Aorta (tissue), 5 donors: ENCODE measurements at regions of chr9 and their contacts with region 1.

Region 1: DNA sequence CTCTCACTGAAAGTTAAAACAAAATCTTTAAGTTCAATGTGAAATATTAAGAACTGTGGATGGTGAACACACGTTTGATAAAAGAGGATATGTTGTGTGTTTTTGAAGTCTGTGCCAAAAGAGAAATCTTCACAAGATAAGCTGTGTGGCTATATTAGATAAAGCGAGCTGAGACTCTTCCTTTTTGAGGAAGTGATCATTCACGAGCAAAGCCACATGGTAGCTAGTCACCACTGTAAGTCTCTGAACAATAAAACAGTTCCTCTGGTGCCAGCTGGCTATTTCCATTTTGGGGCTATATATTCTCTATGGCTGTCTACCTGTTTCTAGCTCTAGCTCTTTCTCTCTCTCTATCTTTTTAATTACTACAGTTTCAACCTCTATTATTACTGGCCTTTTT is 1849.2 kb upstream of the C9orf72 start:
- DNase-seq: no peak
- ATAC-seq: no peak
- H3K4me3 ChIP-seq: no peak overlapping the region
- H3K27ac ChIP-seq: no peak overlapping the region
- H3K4me1 ChIP-seq: no peaks in the 10 kb centered on the region
- H3K27me3 ChIP-seq: no peaks in the 10 kb centered on the region

Region 2: DNA sequence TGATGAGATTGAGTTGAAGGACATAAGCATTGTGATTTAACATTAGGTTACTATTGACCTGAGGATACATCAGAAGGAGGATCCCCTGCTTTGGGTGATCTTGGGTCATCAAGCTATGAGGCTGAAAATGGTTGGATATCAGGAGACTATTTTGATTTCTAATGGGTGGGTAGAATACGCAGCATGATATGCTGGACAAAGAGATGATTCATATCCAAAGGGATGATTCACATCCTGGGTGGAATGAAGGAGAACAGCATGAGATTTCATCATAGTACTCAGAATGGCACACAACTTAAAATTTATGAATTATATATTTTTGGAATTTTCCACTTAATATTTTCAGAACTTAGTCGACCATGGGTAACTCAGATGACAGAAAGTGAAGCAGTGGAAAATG is 89.6 kb before region 1 on chr9:
- intact Hi-C with region 1: loop called in 1 of 2 experiments (anchors 10 kb)
- DNase-seq: no peak
- ATAC-seq: no peak
- H3K4me3 ChIP-seq: no peak overlapping the region
- H3K27ac ChIP-seq: no peak overlapping the region
- H3K4me1 ChIP-seq: no peaks in the 10 kb centered on the region
- H3K27me3 ChIP-seq: no peaks in the 10 kb centered on the region

Region 3: GRCh38 chr9:29648601-29649000 is 226.2 kb after region 1 on chr9:
- intact Hi-C with region 1: no loop called
- DNase-seq: no peak
- ATAC-seq: no peak
- H3K4me3 ChIP-seq: no peak overlapping the region
- H3K27ac ChIP-seq: no peak overlapping the region
- H3K4me1 ChIP-seq: no peaks in the 10 kb centered on the region
- H3K27me3 ChIP-seq: no peaks in the 10 kb centered on the region